ENCODE measurements at regions of chr7 and their contacts with region 1.

Region 1: GRCh38 chr7:140242057-140243031 is 65.6 kb upstream of the KDM7A start:
- DNase-seq: peak in 1 of 35 experiments; percentile 8
- ATAC-seq: no peak
- H3K4me3 ChIP-seq: no peak overlapping the region
- H3K4me3 Mint-ChIP-seq: no peak overlapping the region
- H3K27ac ChIP-seq: no peak overlapping the region
- H3K27ac Mint-ChIP-seq: no peak overlapping the region
- H3K4me1 ChIP-seq: peaks cover 8% of the 10 kb centered on the region in 2 experiments
- H3K4me1 Mint-ChIP-seq: peaks cover 4 to 13% (median 13%) of the 10 kb centered on the region in 3 donors
- H3K27me3 ChIP-seq: no peaks in the 10 kb centered on the region
- H3K27me3 Mint-ChIP-seq: no peaks in the 10 kb centered on the region

Region 2: GRCh38 chr7:140260352-140261104 is 18.2 kb after region 1 on chr7:
- CTCF ChIA-PET with region 1: no interaction called
- POLR2A ChIA-PET with region 1: no interaction called
- DNase-seq: no peak
- ATAC-seq: no peak
- H3K4me3 ChIP-seq: no peak overlapping the region
- H3K4me3 Mint-ChIP-seq: no peak overlapping the region
- H3K27ac ChIP-seq: no peak overlapping the region
- H3K27ac Mint-ChIP-seq: no peak overlapping the region
- H3K4me1 ChIP-seq: peaks cover 18 to 42% of the 10 kb centered on the region in 2 experiments
- H3K4me1 Mint-ChIP-seq: peaks cover 46 to 49% (median 47%) of the 10 kb centered on the region in 3 donors
- H3K27me3 ChIP-seq: no peaks in the 10 kb centered on the region
- H3K27me3 Mint-ChIP-seq: no peaks in the 10 kb centered on the region

Region 3: DNA sequence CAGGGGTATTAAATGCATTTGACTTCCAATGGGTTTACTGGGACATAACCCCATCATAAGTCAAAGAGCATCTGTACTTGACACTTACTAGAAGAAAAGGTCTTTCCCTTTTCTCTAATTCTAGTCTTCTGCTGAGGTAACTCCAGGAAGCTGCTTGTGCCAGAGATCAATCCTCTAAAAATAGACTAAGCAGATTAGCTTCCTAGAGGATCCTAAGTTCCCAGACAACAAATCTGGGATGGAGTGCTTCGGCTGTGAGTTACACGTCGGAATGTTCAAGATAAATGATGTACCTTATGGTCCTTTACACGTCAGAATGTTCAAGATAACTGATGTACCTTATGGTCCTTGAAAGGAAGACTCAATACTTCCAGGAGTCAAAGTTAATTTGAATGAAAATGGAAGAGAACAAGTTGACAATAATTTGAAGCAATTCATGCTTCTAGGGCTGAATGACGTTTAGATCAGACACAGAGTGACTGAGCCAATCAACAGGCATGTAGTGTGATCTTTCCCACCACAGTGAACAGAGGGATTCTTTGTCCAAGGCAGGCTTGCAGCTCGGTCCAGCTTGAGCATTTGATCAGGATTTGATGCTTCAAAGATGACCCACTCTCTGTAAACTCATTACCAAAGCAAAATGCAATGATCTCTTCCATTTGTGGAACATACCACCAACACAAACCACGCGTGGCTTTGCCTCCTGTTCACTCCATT is 92.2 kb after region 1 on chr7:
- CTCF ChIA-PET with region 1: no interaction called
- POLR2A ChIA-PET with region 1: interaction called in 1 of 2 experiments, 15 read pairs
- DNase-seq: no peak
- ATAC-seq: no peak
- H3K4me3 ChIP-seq: no peak overlapping the region
- H3K4me3 Mint-ChIP-seq: no peak overlapping the region
- H3K27ac ChIP-seq: no peak overlapping the region
- H3K27ac Mint-ChIP-seq: no peak overlapping the region
- H3K4me1 ChIP-seq: no peaks in the 10 kb centered on the region
- H3K4me1 Mint-ChIP-seq: peaks cover 0 to 5% (median 0%) of the 10 kb centered on the region in 3 donors
- H3K27me3 ChIP-seq: no peaks in the 10 kb centered on the region
- H3K27me3 Mint-ChIP-seq: no peaks in the 10 kb centered on the region